B cell (primary cell): ENCODE measurements at regions of chr13 and their contacts with region 1.

Region 1: GRCh38 chr13:95191821-95192563 is 109.3 kb downstream of the ABCC4 start:
- DNase-seq: peak; percentile 67
- ATAC-seq: peak; percentile 89
- H3K4me3 ChIP-seq: no peak overlapping the region
- H3K4me3 Mint-ChIP-seq: no peak overlapping the region
- H3K27ac ChIP-seq: no peak overlapping the region
- H3K27ac Mint-ChIP-seq: no peak overlapping the region
- H3K4me1 ChIP-seq: no peaks in the 10 kb centered on the region
- H3K4me1 Mint-ChIP-seq: peaks cover 1% of the 10 kb centered on the region
- H3K27me3 ChIP-seq: no peaks in the 10 kb centered on the region
- H3K27me3 Mint-ChIP-seq: no peaks in the 10 kb centered on the region
- CTCF ChIP-seq: peak; percentile 77

Region 2: DNA sequence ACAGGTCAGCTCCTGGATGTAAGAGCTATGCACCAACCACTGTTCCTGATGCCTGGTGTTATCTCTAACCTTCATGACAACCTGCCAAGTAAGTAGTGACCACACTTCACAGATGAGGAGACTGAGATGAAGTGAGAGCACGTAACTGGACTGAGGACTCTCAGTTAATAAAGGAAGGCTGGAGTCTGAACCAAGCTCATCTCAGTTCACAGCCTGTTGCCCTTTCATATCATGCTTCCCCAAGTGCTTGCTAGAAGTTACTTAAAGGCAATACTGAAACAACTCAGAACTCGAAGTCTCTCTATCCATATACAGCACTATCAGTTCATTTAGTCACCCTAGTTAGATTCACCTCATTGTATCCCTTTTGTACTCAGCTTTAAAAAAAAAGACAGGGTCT is 10.4 kb before region 1 on chr13:
- CTCF ChIA-PET with region 1: interaction called, 13 read pairs
- POLR2A ChIA-PET with region 1: no interaction called
- intact Hi-C with region 1: no loop called
- DNase-seq: no peak
- ATAC-seq: no peak
- H3K4me3 ChIP-seq: no peak overlapping the region
- H3K4me3 Mint-ChIP-seq: no peak overlapping the region
- H3K27ac ChIP-seq: no peak overlapping the region
- H3K27ac Mint-ChIP-seq: no peak overlapping the region
- H3K4me1 ChIP-seq: peaks cover 6 to 10% of the 10 kb centered on the region in 2 donors
- H3K4me1 Mint-ChIP-seq: peaks cover 14% of the 10 kb centered on the region
- H3K27me3 ChIP-seq: no peaks in the 10 kb centered on the region
- H3K27me3 Mint-ChIP-seq: no peaks in the 10 kb centered on the region
- CTCF ChIP-seq: no peak

Region 3: GRCh38 chr13:95226932-95227695 is 35.1 kb after region 1 on chr13:
- CTCF ChIA-PET with region 1: interaction called, 12 read pairs
- POLR2A ChIA-PET with region 1: no interaction called
- intact Hi-C with region 1: no loop called
- DNase-seq: peak; percentile 33
- ATAC-seq: peak; percentile 70
- H3K4me3 ChIP-seq: peak overlapping the region in 2 of 5 experiments; percentile 1 to 33
- H3K4me3 Mint-ChIP-seq: peak overlapping the region; percentile 70
- H3K27ac ChIP-seq: peak overlapping the region; percentile 23 to 37
- H3K27ac Mint-ChIP-seq: peak overlapping the region; percentile 57
- H3K4me1 ChIP-seq: peaks cover 12 to 22% of the 10 kb centered on the region in 2 donors
- H3K4me1 Mint-ChIP-seq: peaks cover 21% of the 10 kb centered on the region
- H3K27me3 ChIP-seq: no peaks in the 10 kb centered on the region
- H3K27me3 Mint-ChIP-seq: no peaks in the 10 kb centered on the region
- CTCF ChIP-seq: no peak

Region 4: DNA sequence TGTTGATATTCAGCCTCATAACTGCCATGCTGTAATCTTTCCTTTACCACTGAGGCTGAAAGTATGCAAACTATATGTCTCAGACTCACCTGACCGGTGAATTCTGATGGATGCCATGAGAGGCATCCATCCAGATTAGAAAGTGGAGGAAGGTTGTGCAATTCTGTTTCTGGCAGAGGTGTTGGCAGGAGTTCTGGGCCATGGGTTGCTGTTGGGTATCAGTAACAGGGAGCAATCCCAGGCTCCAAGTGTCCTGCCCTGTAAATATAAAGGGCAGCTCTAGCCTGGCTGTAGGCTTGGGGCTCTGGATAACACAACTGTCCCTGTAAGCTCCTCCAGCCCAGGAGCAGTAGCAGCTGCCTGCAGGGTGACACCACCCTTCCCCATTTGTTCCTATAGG is 186.6 kb after region 1 on chr13:
- CTCF ChIA-PET with region 1: interaction called, 212 read pairs
- POLR2A ChIA-PET with region 1: no interaction called
- intact Hi-C with region 1: loop called (anchors 1 kb)
- DNase-seq: no peak
- ATAC-seq: no peak
- H3K4me3 ChIP-seq: no peak overlapping the region
- H3K4me3 Mint-ChIP-seq: no peak overlapping the region
- H3K27ac ChIP-seq: no peak overlapping the region
- H3K27ac Mint-ChIP-seq: no peak overlapping the region
- H3K4me1 ChIP-seq: peaks cover 0 to 8% of the 10 kb centered on the region in 2 donors
- H3K4me1 Mint-ChIP-seq: peaks cover 8% of the 10 kb centered on the region
- H3K27me3 ChIP-seq: peaks cover 0 to 22% (median 6%) of the 10 kb centered on the region in 4 experiments
- H3K27me3 Mint-ChIP-seq: peaks cover 29% of the 10 kb centered on the region
- CTCF ChIP-seq: no peak

Region 5: GRCh38 chr13:95403828-95404522 is 212.0 kb after region 1 on chr13:
- CTCF ChIA-PET with region 1: interaction called, 477 read pairs
- POLR2A ChIA-PET with region 1: interaction called, 3 read pairs
- intact Hi-C with region 1: loop called (anchors 1 kb)
- DNase-seq: peak; percentile 78
- ATAC-seq: peak; percentile 80
- H3K4me3 ChIP-seq: peak overlapping the region in 4 of 5 experiments; percentile 15 to 53 (median 30)
- H3K4me3 Mint-ChIP-seq: peak overlapping the region; percentile 89
- H3K27ac ChIP-seq: no peak overlapping the region
- H3K27ac Mint-ChIP-seq: no peak overlapping the region
- H3K4me1 ChIP-seq: peaks cover 9% of the 10 kb centered on the region in 2 donors
- H3K4me1 Mint-ChIP-seq: peaks cover 9% of the 10 kb centered on the region
- H3K27me3 ChIP-seq: peaks cover 0 to 18% (median 8%) of the 10 kb centered on the region in 4 experiments
- H3K27me3 Mint-ChIP-seq: peaks cover 28% of the 10 kb centered on the region
- CTCF ChIP-seq: peak; percentile 93

Region 6: DNA sequence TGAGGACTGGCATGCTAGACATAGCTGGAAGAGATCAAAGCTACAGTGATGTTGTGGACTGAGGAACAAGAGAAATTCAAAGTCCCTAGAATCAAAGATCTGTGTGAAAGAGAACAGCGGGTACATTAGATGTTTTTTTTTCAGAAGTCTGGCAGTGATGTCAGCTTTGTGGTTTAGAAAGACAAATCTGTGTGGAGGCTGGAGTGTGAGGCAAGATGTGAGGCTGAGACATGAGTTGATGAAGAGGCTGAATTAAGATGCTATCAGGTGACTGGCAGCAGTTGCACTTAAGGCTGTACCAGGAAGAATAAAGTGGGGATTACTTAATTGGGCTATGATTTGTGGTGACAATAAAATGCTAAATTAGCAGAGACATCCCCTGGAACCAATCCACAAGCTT is 531.4 kb after region 1 on chr13:
- CTCF ChIA-PET with region 1: no interaction called
- POLR2A ChIA-PET with region 1: no interaction called
- intact Hi-C with region 1: no loop called
- DNase-seq: no peak
- ATAC-seq: no peak
- H3K4me3 ChIP-seq: no peak overlapping the region
- H3K4me3 Mint-ChIP-seq: no peak overlapping the region
- H3K27ac ChIP-seq: no peak overlapping the region
- H3K27ac Mint-ChIP-seq: no peak overlapping the region
- H3K4me1 ChIP-seq: no peaks in the 10 kb centered on the region
- H3K4me1 Mint-ChIP-seq: peaks cover 9% of the 10 kb centered on the region
- H3K27me3 ChIP-seq: no peaks in the 10 kb centered on the region
- H3K27me3 Mint-ChIP-seq: no peaks in the 10 kb centered on the region
- CTCF ChIP-seq: no peak

Region 7: GRCh38 chr13:95834134-95834765 is 642.3 kb after region 1 on chr13:
- CTCF ChIA-PET with region 1: interaction called, 20 read pairs
- POLR2A ChIA-PET with region 1: no interaction called
- intact Hi-C with region 1: loop called (anchors 1 kb)
- DNase-seq: peak; percentile 71
- ATAC-seq: peak; percentile 81
- H3K4me3 ChIP-seq: no peak overlapping the region
- H3K4me3 Mint-ChIP-seq: no peak overlapping the region
- H3K27ac ChIP-seq: no peak overlapping the region
- H3K27ac Mint-ChIP-seq: no peak overlapping the region
- H3K4me1 ChIP-seq: no peaks in the 10 kb centered on the region
- H3K4me1 Mint-ChIP-seq: peaks cover 2% of the 10 kb centered on the region
- H3K27me3 ChIP-seq: no peaks in the 10 kb centered on the region
- H3K27me3 Mint-ChIP-seq: no peaks in the 10 kb centered on the region
- CTCF ChIP-seq: peak; percentile 98